ENCODE measurements at regions of chr12 and their contacts with region 1.

Region 1: GRCh38 chr12:11649703-11650521 is 438 bp downstream of the ETV6 start:
- DNase-seq: peak; percentile 26 to 65
- ATAC-seq: peak; percentile 25 to 59 (median 52)
- H3K4me3 ChIP-seq: peak overlapping the region; percentile 97
- H3K4me3 Mint-ChIP-seq: peak overlapping the region; percentile 98
- H3K27ac ChIP-seq: peak overlapping the region; percentile 91
- H3K27ac Mint-ChIP-seq: peak overlapping the region; percentile 88 to 95
- H3K4me1 ChIP-seq: peaks cover 31% of the 10 kb centered on the region
- H3K4me1 Mint-ChIP-seq: peaks cover 38 to 46% of the 10 kb centered on the region in 2 donors
- H3K27me3 ChIP-seq: no peaks in the 10 kb centered on the region
- H3K27me3 Mint-ChIP-seq: no peaks in the 10 kb centered on the region
- CTCF ChIP-seq: no peak

Region 2: DNA sequence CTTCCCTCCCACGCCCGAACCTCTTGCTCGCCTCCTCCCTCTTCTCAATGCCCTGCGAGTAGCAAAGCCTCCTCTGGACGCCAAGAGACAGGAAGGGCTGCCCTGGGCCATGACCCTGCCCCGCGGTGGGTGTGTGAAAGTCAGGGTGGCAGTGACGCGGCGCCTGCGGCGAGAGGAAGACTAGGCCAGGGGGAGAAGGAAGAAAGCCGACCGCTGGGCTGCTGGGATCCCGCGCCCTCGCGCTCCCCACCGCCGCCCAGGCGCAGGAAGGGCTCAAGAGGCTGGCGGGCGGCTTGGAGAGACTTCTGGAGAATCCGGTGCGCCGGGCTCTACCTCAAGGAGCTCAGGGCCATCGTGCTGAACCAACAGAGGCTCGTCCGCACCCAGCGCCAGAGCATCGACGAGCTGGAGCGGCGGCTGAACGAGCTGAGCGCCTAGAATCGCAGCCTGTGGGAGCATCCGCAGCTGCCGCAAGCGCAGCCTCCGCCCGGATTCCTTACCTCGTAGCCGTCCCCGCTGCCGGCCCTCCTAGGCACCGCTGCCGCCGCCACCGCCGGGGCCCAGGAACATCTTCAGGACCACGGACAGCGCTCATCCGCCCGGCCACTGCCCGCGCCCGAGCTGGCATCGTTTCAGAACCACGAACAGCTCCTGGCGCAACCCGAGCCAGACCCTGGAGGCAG is 149.6 kb before region 1 on chr12:
- intact Hi-C with region 1: no loop called
- DNase-seq: peak; percentile 85 to 88
- ATAC-seq: peak; percentile 93 to 100 (median 98)
- H3K4me3 ChIP-seq: no peak overlapping the region
- H3K4me3 Mint-ChIP-seq: peak overlapping the region; percentile 25
- H3K27ac ChIP-seq: no peak overlapping the region
- H3K27ac Mint-ChIP-seq: peak overlapping the region in 1 of 2 donors; percentile 57
- H3K4me1 ChIP-seq: peaks cover 9% of the 10 kb centered on the region
- H3K4me1 Mint-ChIP-seq: peaks cover 7 to 12% of the 10 kb centered on the region in 2 donors
- H3K27me3 ChIP-seq: peaks cover 4% of the 10 kb centered on the region
- H3K27me3 Mint-ChIP-seq: peaks cover 23 to 37% of the 10 kb centered on the region in 2 donors
- CTCF ChIP-seq: no peak

Region 3: GRCh38 chr12:11719678-11720099 is 69.8 kb after region 1 on chr12:
- intact Hi-C with region 1: no loop called
- DNase-seq: peak in 1 of 2 donors; percentile 27
- ATAC-seq: peak; percentile 48 to 74 (median 49)
- H3K4me3 ChIP-seq: no peak overlapping the region
- H3K4me3 Mint-ChIP-seq: no peak overlapping the region
- H3K27ac ChIP-seq: no peak overlapping the region
- H3K27ac Mint-ChIP-seq: peak overlapping the region in 1 of 2 donors; percentile 15
- H3K4me1 ChIP-seq: peaks cover 14% of the 10 kb centered on the region
- H3K4me1 Mint-ChIP-seq: peaks cover 42 to 49% of the 10 kb centered on the region in 2 donors
- H3K27me3 ChIP-seq: no peaks in the 10 kb centered on the region
- H3K27me3 Mint-ChIP-seq: no peaks in the 10 kb centered on the region
- CTCF ChIP-seq: no peak

Region 4: GRCh38 chr12:12010277-12011039 is 360.5 kb after region 1 on chr12:
- intact Hi-C with region 1: loop called (anchors 2 kb)
- DNase-seq: peak; percentile 49 to 77
- ATAC-seq: peak; percentile 69 to 84 (median 77)
- H3K4me3 ChIP-seq: peak overlapping the region; percentile 29
- H3K4me3 Mint-ChIP-seq: peak overlapping the region; percentile 88
- H3K27ac ChIP-seq: peak overlapping the region; percentile 65
- H3K27ac Mint-ChIP-seq: peak overlapping the region; percentile 46 to 82
- H3K4me1 ChIP-seq: peaks cover 49% of the 10 kb centered on the region
- H3K4me1 Mint-ChIP-seq: peaks cover 36 to 53% of the 10 kb centered on the region in 2 donors
- H3K27me3 ChIP-seq: peaks cover 3% of the 10 kb centered on the region
- H3K27me3 Mint-ChIP-seq: peaks cover 56 to 81% of the 10 kb centered on the region in 2 donors
- CTCF ChIP-seq: no peak

Measured in natural killer cell (primary cell).